ENCODE measurements at regions of chr9 and their contacts with region 1.

Region 1: GRCh38 chr9:130480331-130481072 is 35.7 kb downstream of the ASS1 start:
- ATAC-seq: peak in 1 of 8 experiments; percentile 36
- H3K4me3 ChIP-seq: no peak overlapping the region
- H3K27ac ChIP-seq: no peak overlapping the region
- H3K4me1 ChIP-seq: peaks cover 41 to 54% of the 10 kb centered on the region in 2 donors

Region 2: GRCh38 chr9:130343445-130343918 is 137.0 kb before region 1 on chr9:
- in situ Hi-C with region 1: no loop called
- ATAC-seq: peak; percentile 25 to 71 (median 44)
- H3K4me3 ChIP-seq: no peak overlapping the region
- H3K27ac ChIP-seq: no peak overlapping the region
- H3K4me1 ChIP-seq: peaks cover 12 to 14% of the 10 kb centered on the region in 2 donors

Region 3: GRCh38 chr9:130390374-130390773 is 90.1 kb before region 1 on chr9:
- in situ Hi-C with region 1: no loop called
- ATAC-seq: peak in 7 of 8 experiments; percentile 12 to 68 (median 60)
- H3K4me3 ChIP-seq: no peak overlapping the region
- H3K27ac ChIP-seq: no peak overlapping the region
- H3K4me1 ChIP-seq: peaks cover 4 to 13% of the 10 kb centered on the region in 2 donors

Region 4: DNA sequence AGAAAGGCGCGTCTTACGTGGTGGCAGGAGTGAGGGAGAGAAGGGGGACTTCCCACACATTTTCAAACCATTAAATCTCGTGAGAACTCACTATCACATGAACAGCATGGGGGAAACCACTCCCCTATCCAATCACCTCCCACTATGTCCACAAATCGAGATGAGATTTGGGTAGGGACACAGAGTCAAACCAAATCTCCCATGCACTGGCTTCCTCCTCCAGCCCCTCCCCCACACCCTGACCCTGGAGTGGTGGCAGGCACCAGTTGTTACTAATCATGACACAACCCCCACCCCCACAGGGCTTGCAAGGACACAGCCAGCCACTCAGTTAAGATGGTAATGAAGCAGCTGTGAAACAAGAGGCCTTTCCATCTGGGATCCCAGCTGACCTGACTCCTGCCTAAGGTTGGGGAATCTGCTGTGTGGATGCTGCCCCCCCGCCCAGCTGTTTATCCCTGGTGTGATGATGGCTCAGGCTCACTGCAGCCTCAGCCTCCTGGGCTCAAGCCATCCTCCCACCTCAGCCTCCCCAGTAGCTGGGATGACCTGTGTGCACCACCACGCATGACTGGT is 41.8 kb after region 1 on chr9:
- in situ Hi-C with region 1: loop called in 1 of 9 experiments (anchors 10 kb)
- ATAC-seq: peak in 4 of 8 experiments; percentile 20 to 59 (median 37)
- H3K4me3 ChIP-seq: no peak overlapping the region
- H3K27ac ChIP-seq: no peak overlapping the region
- H3K4me1 ChIP-seq: peaks cover 12 to 14% of the 10 kb centered on the region in 2 donors

Region 5: DNA sequence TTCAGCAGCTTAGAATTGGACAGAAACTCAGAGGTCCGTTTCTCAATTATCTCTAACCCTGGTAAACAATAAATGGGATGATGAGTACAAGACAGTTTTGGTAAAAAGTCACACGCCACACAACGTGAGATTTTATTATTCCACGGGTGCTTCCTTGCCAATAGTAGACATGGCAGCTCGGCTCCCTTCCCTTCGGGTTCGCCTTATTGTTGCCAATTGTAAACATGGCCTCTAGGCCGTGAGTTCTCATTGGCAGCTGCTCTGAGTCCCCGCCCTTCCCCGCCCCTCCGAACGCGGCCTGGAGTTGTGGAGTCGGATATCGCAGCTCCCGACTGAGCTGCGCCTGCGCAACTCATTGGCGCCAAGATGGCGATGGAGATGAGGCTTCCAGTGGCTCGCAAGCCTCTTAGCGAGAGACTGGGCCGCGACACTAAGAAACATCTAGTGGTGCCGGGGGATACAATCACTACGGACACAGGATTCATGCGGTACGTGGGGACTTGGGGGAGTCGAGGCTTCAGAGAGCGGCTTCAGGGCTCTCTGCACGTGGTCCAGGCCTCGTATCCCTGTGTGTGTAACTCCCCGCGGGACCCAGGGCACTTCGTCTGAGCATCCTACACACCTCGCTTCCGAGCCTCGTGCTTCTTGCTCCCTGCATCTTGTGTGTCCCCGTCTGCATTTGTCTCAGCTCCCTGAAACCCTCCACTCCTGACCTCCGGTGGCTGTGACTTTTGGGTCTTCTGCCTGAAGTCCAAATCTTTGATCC is 213.1 kb after region 1 on chr9 and contains the start of gene EXOSC2:
- in situ Hi-C with region 1: loop called in 1 of 9 experiments (anchors 25 kb)
- ATAC-seq: peak; percentile 76 to 97 (median 96)
- H3K4me3 ChIP-seq: peak within 1 kb of the TSS; percentile 59 to 89 (median 76)
- H3K27ac ChIP-seq: peak within 1 kb of the TSS; percentile 46 to 54
- H3K4me1 ChIP-seq: peaks cover 13 to 16% of the 10 kb centered on the region in 2 donors
- total RNA-seq, gene EXOSC2: 18.5 to 59.3 (median 28.7) TPM

Measured in motor neuron (in vitro differentiated cells).